ENCODE measurements at regions of chr2 and their contacts with region 1.

Region 1: GRCh38 chr2:73984203-73984921 is at the start of gene TET3:
- DNase-seq: no peak
- H3K4me3 ChIP-seq: peak within 1 kb of the TSS; percentile 45 to 71 (median 69)
- H3K27ac ChIP-seq: peak within 1 kb of the TSS; percentile 85
- H3K4me1 ChIP-seq: peaks cover 73% of the 10 kb centered on the region
- H3K27me3 ChIP-seq: no peaks in the 10 kb centered on the region
- CTCF ChIP-seq: no peak
- total RNA-seq, gene TET3: 6.0 to 14.9 TPM

Region 2: DNA sequence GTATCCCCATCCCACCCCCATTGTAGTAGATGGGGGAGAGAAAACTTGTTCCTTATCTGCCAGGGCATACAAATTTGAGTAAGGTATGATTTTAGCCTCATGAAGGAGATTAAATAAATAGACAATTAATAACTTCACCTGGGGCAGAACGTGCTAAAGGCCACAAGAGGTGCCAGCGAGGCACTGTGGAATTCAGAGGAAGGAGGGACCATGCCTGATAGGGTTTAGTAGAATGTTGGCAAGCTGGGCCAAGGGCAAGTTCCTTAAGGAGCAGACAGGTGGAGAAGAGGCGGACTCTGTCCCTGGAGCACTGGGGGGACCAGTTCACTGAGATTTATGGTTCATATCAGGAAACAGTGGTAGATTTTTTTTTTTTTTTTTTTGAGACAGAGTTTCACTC is 133.1 kb before region 1 on chr2:
- CTCF ChIA-PET with region 1: interaction called, 4 read pairs
- dilution Hi-C with region 1: no loop called
- in situ Hi-C with region 1: no loop called
- intact Hi-C with region 1: loop called (anchors 5 kb)
- DNase-seq: no peak
- H3K4me3 ChIP-seq: no peak overlapping the region
- H3K27ac ChIP-seq: no peak overlapping the region
- H3K4me1 ChIP-seq: peaks cover 21% of the 10 kb centered on the region
- H3K27me3 ChIP-seq: no peaks in the 10 kb centered on the region
- CTCF ChIP-seq: peak; percentile 52 to 62

Region 3: GRCh38 chr2:73931531-73932500 is 52.5 kb before region 1 on chr2:
- CTCF ChIA-PET with region 1: no interaction called
- dilution Hi-C with region 1: loop called (anchors 5 kb)
- in situ Hi-C with region 1: no loop called
- intact Hi-C with region 1: no loop called
- DNase-seq: peak; percentile 78
- H3K4me3 ChIP-seq: no peak overlapping the region
- H3K27ac ChIP-seq: peak overlapping the region; percentile 58
- H3K4me1 ChIP-seq: peaks cover 75% of the 10 kb centered on the region
- H3K27me3 ChIP-seq: no peaks in the 10 kb centered on the region
- CTCF ChIP-seq: no peak

Region 4: DNA sequence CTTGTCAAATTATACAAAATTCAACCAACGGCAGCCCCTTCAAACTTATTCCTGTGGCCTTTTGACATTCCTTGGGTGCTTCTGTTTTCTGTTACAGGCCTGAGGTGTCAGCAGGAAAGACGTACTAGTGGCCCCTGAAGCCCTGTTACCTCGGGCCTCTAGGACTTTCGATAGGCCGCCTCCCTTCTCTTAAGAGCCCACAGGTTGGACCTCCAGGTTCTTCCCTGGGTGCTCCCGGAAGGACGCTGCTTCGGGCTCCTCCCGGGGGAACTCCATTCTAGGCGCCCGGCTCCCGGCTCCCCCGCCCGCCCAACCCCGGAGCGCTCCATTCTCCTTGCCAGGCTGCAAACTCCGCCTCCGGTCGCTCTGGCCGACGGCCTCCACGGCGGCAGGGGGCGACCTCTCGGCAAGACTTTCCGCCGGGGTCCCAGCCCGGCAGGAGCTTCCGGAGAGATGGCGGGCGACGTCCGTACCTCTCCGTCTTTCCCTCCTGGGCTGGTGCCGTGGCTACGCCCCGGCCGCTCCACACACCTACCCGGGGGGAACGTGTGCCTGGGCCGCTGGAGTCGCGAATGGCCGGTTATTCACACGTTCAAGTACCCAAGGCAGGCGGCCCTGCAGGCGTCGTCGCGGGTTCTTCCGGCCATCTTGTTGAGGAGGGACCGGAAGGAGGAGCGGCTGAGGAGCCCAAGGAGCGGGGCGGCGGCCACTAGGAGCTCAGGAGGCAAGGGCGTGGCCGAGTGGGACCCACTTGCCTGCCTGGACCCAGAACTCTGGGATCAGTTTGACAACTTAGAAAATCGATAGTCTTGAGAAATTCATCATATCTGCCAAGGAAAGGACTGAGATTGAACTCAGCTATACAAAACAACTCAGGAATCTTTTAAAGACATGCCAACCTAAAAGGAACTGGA is 135.8 kb after region 1 on chr2:
- CTCF ChIA-PET with region 1: no interaction called
- dilution Hi-C with region 1: no loop called
- in situ Hi-C with region 1: no loop called
- intact Hi-C with region 1: loop called (anchors 2 kb)
- DNase-seq: peak; percentile 83
- H3K4me3 ChIP-seq: peak overlapping the region; percentile 60 to 86 (median 68)
- H3K27ac ChIP-seq: peak overlapping the region; percentile 52
- H3K4me1 ChIP-seq: peaks cover 12% of the 10 kb centered on the region
- H3K27me3 ChIP-seq: no peaks in the 10 kb centered on the region
- CTCF ChIP-seq: peak; percentile 21 to 67